GM13976 (cell line): ENCODE measurements at regions of chr4 and their contacts with region 1.

Region 1: DNA sequence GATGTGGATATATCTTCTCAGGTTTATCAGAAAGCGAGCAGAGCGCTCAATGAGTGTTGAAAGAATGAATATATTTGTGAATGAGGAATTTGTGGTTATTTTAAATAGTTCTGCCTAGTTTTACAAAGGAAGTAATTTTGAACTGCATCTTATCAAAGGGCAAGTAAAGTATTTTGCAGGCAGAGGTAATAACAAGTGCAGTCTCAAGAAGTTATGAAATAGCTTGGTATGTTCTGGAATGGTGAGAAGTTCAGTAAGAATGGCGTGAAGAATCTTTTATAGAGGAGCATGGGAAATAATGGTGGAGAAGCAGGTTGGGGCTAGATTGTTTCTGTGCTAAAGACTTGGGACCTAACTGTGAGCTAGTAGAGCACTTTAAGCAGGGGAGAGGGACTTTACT is 10.9 kb downstream of the TMA16 start:
- DNase-seq: no peak
- CTCF ChIP-seq: no peak

Region 2: GRCh38 chr4:163148466-163149336 is 356.7 kb before region 1 on chr4:
- in situ Hi-C with region 1: loop called (anchors 25 kb)
- DNase-seq: no peak
- CTCF ChIP-seq: no peak

Region 3: GRCh38 chr4:163385508-163385907 is 119.9 kb before region 1 on chr4:
- in situ Hi-C with region 1: no loop called
- DNase-seq: no peak
- CTCF ChIP-seq: no peak